Dendritic cell treated with granulocyte-macrophage colony-stimulating factor and Interleukin-4, amounts not matched to agents 40 ng/mL and 50 ng/mL, for 4 days (primary cell): ENCODE measurements at regions of chr6 and their contacts with region 1.

Region 1: DNA sequence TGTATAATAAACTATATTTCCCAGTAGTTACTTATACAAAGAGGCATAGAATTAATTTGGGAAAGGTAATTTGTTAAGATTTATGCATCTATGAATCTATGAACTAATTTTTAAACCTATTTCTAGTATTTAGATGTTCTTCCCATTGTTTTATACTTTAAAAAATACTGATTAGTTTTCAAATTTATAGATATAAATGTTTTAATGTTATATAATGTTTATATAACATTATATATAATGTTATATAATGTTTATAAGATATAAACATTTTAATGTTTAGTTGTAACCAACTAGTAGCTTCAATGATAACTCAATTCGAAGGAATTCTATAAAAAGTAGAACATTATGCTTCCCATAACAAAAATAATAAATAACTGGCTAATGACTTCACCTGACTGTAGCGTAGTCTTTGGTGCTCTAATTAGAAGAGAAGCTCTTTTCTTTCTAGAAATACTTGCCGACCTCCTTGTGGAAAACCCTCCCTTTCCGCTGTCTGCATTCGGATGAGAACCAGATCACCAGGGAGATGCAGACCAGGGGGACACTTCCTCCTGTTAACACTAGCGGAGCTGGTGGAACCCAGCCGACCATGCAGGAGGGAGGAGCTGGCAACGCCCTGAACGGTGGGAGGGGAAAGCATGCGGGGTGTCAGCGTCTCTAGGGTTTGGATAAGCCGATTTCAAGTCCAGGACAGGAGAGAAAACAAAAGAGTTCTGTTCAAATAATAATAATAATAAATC is 158.4 kb downstream of the OR2B2 start:
- H3K4me3 Mint-ChIP-seq: peak overlapping the region; percentile 52
- H3K27ac Mint-ChIP-seq: peak overlapping the region; percentile 21
- H3K4me1 Mint-ChIP-seq: peaks cover 26% of the 10 kb centered on the region
- H3K27me3 Mint-ChIP-seq: peaks cover 3% of the 10 kb centered on the region

Region 2: GRCh38 chr6:27126815-27127537 is 626.9 kb before region 1 on chr6:
- intact Hi-C with region 1: loop called (anchors 5 kb)
- H3K4me3 Mint-ChIP-seq: peak overlapping the region; percentile 82
- H3K27ac Mint-ChIP-seq: peak overlapping the region; percentile 90
- H3K4me1 Mint-ChIP-seq: peaks cover 10% of the 10 kb centered on the region
- H3K27me3 Mint-ChIP-seq: no peaks in the 10 kb centered on the region

Region 3: GRCh38 chr6:27479319-27480182 is 274.3 kb before region 1 on chr6:
- intact Hi-C with region 1: loop called (anchors 1 kb)
- H3K4me3 Mint-ChIP-seq: no peak overlapping the region
- H3K27ac Mint-ChIP-seq: no peak overlapping the region
- H3K4me1 Mint-ChIP-seq: no peaks in the 10 kb centered on the region
- H3K27me3 Mint-ChIP-seq: peaks cover 6% of the 10 kb centered on the region

Region 4: DNA sequence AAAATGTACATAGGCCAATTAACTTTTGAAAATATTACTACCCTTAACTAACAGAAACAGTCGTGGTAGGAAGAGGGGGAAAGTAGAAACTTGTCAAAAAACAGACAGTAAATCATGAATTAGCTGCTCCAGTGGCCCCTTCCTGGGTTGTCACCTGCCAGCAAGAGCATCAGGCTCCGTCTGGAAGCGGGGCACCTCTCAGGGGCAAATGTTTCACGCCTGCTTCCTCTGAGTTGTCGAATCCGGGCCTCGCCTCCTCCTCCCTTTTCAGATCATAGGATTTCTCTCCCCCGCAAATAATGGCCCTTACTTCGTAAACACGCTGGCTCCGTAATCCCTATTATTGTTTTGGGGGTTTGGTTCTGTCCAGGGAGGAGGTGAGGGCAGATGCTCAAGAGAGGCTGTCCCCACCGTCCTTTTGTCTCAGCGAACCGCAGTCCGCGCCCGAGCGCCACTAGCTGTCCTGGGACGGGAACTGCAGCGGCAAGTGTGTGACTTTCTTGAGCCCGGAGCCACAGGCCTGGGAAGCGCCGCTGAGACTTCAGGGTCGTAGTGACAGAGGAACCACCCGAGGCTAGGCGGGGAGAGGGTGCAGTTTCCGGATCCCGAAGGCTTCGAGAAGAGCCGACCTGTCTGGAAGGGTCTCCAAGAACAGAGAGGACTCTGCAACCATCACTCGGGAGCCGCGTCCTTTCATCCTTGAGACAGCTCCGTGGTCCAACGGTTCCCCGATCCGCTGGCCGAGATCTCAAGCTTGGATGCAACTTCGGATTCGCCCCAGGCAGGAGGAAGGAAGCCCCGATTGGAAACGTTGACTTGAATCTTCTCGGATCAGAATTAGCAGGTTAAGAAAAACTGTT is 66.5 kb before region 1 on chr6:
- intact Hi-C with region 1: loop called (anchors 1 kb)
- H3K4me3 Mint-ChIP-seq: peak overlapping the region; percentile 78
- H3K27ac Mint-ChIP-seq: no peak overlapping the region
- H3K4me1 Mint-ChIP-seq: peaks cover 11% of the 10 kb centered on the region
- H3K27me3 Mint-ChIP-seq: peaks cover 65% of the 10 kb centered on the region

Region 5: GRCh38 chr6:27795697-27796494 is 42.1 kb after region 1 on chr6:
- intact Hi-C with region 1: loop called (anchors 1 kb)
- H3K4me3 Mint-ChIP-seq: no peak overlapping the region
- H3K27ac Mint-ChIP-seq: no peak overlapping the region
- H3K4me1 Mint-ChIP-seq: peaks cover 15% of the 10 kb centered on the region
- H3K27me3 Mint-ChIP-seq: peaks cover 14% of the 10 kb centered on the region